ENCODE measurements at regions of chr16 and their contacts with region 1.

Region 1: GRCh38 chr16:17369421-17370222 is 101.1 kb downstream of the XYLT1 start:
- DNase-seq: peak; percentile 90 to 92 (median 90)
- H3K4me3 ChIP-seq: peak overlapping the region in 1 of 3 experiments; percentile 46
- H3K4me3 Mint-ChIP-seq: peak overlapping the region; percentile 65 to 87
- H3K27ac ChIP-seq: peak overlapping the region; percentile 88 to 96
- H3K27ac Mint-ChIP-seq: peak overlapping the region; percentile 95 to 99 (median 98)
- H3K4me1 ChIP-seq: peaks cover 72 to 75% of the 10 kb centered on the region in 2 donors
- H3K4me1 Mint-ChIP-seq: peaks cover 75% of the 10 kb centered on the region
- H3K27me3 ChIP-seq: no peaks in the 10 kb centered on the region
- H3K27me3 Mint-ChIP-seq: no peaks in the 10 kb centered on the region
- CTCF ChIP-seq: no peak

Region 2: GRCh38 chr16:17328932-17329331 is 40.7 kb before region 1 on chr16:
- intact Hi-C with region 1: loop called in 1 of 2 experiments (anchors 10 kb)
- DNase-seq: no peak
- H3K4me3 ChIP-seq: no peak overlapping the region
- H3K4me3 Mint-ChIP-seq: no peak overlapping the region
- H3K27ac ChIP-seq: no peak overlapping the region
- H3K27ac Mint-ChIP-seq: no peak overlapping the region
- H3K4me1 ChIP-seq: peaks cover 2% of the 10 kb centered on the region in 2 donors
- H3K4me1 Mint-ChIP-seq: peaks cover 7% of the 10 kb centered on the region
- H3K27me3 ChIP-seq: no peaks in the 10 kb centered on the region
- H3K27me3 Mint-ChIP-seq: no peaks in the 10 kb centered on the region
- CTCF ChIP-seq: no peak

Region 3: DNA sequence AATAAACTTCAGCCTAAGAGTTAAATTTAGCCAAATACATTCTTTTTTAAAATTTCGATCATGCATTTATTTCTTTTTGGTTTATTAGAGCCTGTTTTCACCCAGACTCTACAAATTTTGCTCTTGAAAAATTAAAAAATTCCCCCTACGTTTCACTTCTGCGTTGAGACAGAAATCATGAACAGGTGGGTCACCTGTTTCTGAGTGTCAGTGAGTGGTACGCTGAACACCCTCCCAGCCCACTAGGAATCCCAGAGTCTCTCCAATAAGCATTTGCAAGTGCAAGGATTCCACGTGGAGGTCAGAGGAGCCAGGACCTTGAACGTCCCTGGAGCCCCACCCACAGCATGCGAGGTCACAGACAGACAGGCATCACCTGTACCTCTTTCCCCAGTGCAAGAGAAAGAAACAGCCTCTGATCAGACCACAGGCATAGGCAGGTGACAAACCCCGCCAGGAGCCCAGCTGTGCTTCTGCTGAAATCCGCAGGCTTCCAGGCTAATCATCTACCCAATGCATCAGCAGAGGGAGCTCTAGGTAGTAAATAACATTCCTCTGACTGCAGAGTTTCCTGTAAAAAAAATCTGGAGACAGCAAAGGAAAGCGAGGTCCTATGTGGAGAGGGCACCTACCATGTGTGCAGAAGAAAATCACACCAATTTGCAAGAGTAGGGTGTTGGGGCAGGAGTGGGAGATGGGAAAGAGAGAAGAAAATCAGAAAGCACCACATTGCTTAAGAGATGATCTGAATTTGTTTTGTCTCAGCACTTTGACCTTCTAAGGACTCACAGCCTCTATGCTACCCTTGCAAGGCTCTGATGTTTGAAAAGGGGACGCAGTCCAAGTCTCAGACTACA is 107.0 kb after region 1 on chr16:
- intact Hi-C with region 1: loop called in 1 of 2 experiments (anchors 10 kb)
- DNase-seq: peak in 1 of 3 donors; percentile 28
- H3K4me3 ChIP-seq: no peak overlapping the region
- H3K4me3 Mint-ChIP-seq: peak overlapping the region in 1 of 2 donors; percentile 28
- H3K27ac ChIP-seq: no peak overlapping the region
- H3K27ac Mint-ChIP-seq: no peak overlapping the region
- H3K4me1 ChIP-seq: peaks cover 12 to 14% of the 10 kb centered on the region in 2 donors
- H3K4me1 Mint-ChIP-seq: peaks cover 19% of the 10 kb centered on the region
- H3K27me3 ChIP-seq: peaks cover 18 to 19% of the 10 kb centered on the region in 2 donors
- H3K27me3 Mint-ChIP-seq: peaks cover 31 to 43% (median 35%) of the 10 kb centered on the region in 3 donors
- CTCF ChIP-seq: peak; percentile 49